Activated CD4-positive, alpha-beta T cell treated with anti-CD3 and anti-CD28 coated beads for 36 hours (primary cell): ENCODE measurements at regions of chr10 and their contacts with region 1.

Region 1: GRCh38 chr10:25758041-25758457 is 176.0 kb upstream of the MYO3A start:
- DNase-seq: peak; percentile 18
- ATAC-seq: no peak
- H3K4me3 Mint-ChIP-seq: no peak overlapping the region
- H3K27ac Mint-ChIP-seq: no peak overlapping the region
- H3K4me1 Mint-ChIP-seq: no peaks in the 10 kb centered on the region
- H3K27me3 Mint-ChIP-seq: no peaks in the 10 kb centered on the region

Region 2: GRCh38 chr10:25713894-25714240 is 44.2 kb before region 1 on chr10:
- CTCF ChIA-PET with region 1: no interaction called
- POLR2A ChIA-PET with region 1: no interaction called
- intact Hi-C with region 1: no loop called
- DNase-seq: no peak
- ATAC-seq: no peak
- H3K4me3 Mint-ChIP-seq: no peak overlapping the region
- H3K27ac Mint-ChIP-seq: no peak overlapping the region
- H3K4me1 Mint-ChIP-seq: no peaks in the 10 kb centered on the region
- H3K27me3 Mint-ChIP-seq: peaks cover 5% of the 10 kb centered on the region

Region 3: GRCh38 chr10:26269754-26270153 is 511.7 kb after region 1 on chr10:
- CTCF ChIA-PET with region 1: no interaction called
- POLR2A ChIA-PET with region 1: no interaction called
- intact Hi-C with region 1: loop called in 1 of 2 experiments (anchors 10 kb)
- DNase-seq: no peak
- ATAC-seq: no peak
- H3K4me3 Mint-ChIP-seq: no peak overlapping the region
- H3K27ac Mint-ChIP-seq: no peak overlapping the region
- H3K4me1 Mint-ChIP-seq: no peaks in the 10 kb centered on the region
- H3K27me3 Mint-ChIP-seq: peaks cover 7% of the 10 kb centered on the region